Left ventricle myocardium inferior (tissue), 1 donor: ENCODE measurements at regions of chr12 and their contacts with region 1.

Region 1: GRCh38 chr12:1939801-1940607 is 21.6 kb upstream of the CACNA2D4 start:
- DNase-seq: peak; percentile 86
- H3K4me3 ChIP-seq: peak overlapping the region; percentile 9
- H3K27ac ChIP-seq: peak overlapping the region; percentile 14
- H3K4me1 ChIP-seq: peaks cover 31% of the 10 kb centered on the region
- H3K27me3 ChIP-seq: no peaks in the 10 kb centered on the region
- CTCF ChIP-seq: peak; percentile 99

Region 2: DNA sequence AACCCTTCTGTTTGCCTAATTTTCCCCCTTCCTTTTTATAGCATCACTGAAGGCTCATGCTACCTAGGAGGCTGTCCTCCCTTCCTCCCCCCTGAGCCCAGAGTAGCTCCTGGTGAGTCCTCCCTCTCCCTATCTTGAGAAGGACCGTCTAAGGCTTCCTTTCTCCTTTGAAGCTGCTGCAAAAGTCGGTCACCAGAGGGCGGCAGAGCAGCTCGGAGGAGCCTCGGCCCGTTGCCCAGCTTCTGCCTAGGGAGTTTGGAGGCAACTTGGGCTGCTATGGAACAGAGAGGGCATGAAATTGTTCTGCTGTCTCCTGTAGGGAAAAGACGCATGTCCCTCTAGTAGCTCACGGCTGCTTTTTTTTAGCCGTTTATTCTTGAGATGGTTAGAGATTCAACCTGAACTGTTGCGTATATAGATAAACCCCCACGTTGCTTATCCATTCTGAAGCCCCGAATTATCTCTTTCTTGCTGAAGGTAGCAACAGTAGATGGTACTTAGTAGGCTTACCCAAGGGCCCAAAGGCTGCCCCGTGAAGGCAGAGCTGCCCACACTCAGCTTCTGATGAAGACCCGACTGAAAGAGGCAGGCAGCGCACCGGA is 305.3 kb before region 1 on chr12:
- intact Hi-C with region 1: loop called (anchors 10 kb)
- DNase-seq: peak; percentile 85
- H3K4me3 ChIP-seq: no peak overlapping the region
- H3K27ac ChIP-seq: no peak overlapping the region
- H3K4me1 ChIP-seq: peaks cover 51% of the 10 kb centered on the region
- H3K27me3 ChIP-seq: peaks cover 6% of the 10 kb centered on the region
- CTCF ChIP-seq: peak; percentile 91

Region 3: DNA sequence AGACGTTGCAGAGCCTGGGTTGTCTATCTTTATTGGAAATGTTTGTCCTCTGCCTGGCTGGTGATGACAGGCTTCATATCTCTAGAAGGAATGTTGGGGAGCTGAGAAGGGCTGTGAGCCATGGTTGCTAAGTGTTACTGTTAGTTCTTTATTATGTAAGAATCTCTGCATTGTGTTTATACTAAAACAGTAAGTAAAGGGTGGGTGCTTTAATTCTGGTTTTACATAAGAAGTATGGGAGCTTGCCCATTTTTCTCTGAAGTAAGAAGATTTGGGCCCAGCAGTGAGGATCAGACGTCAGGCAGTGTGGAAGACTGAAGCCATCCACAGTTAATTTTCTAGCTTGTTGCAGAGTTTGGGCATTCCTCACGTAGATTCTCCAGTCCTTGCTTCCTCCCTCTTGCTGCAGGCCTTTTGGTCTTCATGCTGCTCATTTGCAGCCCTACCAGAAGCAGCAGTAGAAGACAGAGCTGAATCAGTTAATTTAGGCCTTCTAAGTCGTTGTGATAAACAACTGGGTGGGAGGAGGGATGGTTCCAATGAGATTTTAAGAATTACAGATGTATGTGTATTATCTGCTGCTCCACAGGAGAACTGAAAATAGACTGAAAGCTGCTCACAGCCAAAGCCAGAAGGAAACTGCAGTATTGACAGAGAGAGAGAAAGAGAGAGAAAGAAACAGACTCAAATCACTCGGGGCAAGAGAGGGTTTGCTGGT is 289.6 kb before region 1 on chr12:
- intact Hi-C with region 1: loop called (anchors 10 kb)
- DNase-seq: no peak
- H3K4me3 ChIP-seq: no peak overlapping the region
- H3K27ac ChIP-seq: peak overlapping the region; percentile 81
- H3K4me1 ChIP-seq: peaks cover 37% of the 10 kb centered on the region
- H3K27me3 ChIP-seq: no peaks in the 10 kb centered on the region
- CTCF ChIP-seq: no peak

Region 4: GRCh38 chr12:1795785-1796514 is 144.1 kb before region 1 on chr12:
- intact Hi-C with region 1: loop called (anchors 2 kb)
- DNase-seq: peak; percentile 94
- H3K4me3 ChIP-seq: peak overlapping the region; percentile 80
- H3K27ac ChIP-seq: peak overlapping the region; percentile 89
- H3K4me1 ChIP-seq: peaks cover 58% of the 10 kb centered on the region
- H3K27me3 ChIP-seq: no peaks in the 10 kb centered on the region
- CTCF ChIP-seq: peak; percentile 98

Region 5: DNA sequence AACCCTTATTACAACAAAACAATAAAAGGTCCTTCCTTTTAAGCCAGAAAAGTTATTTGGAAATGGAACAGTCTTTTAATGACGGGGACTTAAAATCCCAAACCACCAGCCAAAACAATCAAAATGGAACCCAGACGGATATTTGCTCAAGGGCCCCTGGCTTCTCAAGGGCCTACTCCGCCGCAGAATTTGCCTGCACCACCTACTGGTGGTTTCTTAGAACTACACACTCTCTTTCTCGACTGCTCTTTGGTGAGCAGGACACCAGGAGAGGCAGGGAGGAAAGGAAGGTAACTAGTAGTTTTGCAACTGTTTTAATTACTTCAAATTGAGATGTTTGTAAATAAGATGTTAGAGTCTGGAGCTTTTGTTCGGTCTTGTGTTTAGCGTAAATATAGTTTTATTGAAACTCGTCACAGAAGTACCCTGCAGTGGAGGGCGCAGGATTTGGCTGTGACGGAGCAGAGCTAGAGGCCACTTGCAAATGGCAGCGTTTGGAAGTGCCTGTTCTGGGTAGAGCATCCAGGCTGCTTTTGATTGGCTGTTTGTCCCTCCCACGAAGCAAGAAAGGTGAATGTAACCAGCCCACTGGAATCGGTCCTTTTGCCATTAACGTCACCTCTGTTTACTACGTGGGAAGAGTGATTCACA is 351.3 kb after region 1 on chr12:
- intact Hi-C with region 1: no loop called
- DNase-seq: no peak
- H3K4me3 ChIP-seq: no peak overlapping the region
- H3K27ac ChIP-seq: peak overlapping the region; percentile 83
- H3K4me1 ChIP-seq: peaks cover 100% of the 10 kb centered on the region
- H3K27me3 ChIP-seq: no peaks in the 10 kb centered on the region
- CTCF ChIP-seq: peak; percentile 72